B cell (primary cell): ENCODE measurements at regions of chr2 and their contacts with region 1.

Region 1: DNA sequence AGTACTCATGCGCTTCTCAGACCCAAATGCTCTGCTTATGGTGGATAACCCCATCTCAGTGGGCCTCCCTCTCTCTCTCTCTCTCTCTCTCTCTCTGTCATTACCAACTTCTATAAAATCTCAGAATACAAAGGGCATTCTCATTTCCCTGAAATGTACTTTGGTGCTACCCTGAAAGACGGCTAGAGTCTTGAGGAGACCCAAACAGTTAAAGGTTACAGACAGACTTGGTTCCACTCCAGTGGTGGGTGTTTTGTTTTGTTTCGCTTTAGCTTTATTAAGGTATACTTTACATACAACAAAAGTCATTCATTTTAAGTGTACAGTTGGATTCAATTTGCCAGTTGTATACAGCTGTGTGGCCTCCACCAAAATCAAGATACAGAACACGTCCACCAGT is 60.9 kb downstream of the BCL11A start:
- DNase-seq: peak; percentile 52
- ATAC-seq: peak; percentile 84
- H3K4me3 ChIP-seq: peak overlapping the region in 1 of 5 experiments; percentile 28
- H3K4me3 Mint-ChIP-seq: peak overlapping the region; percentile 64
- H3K27ac ChIP-seq: peak overlapping the region; percentile 59 to 93
- H3K27ac Mint-ChIP-seq: peak overlapping the region; percentile 88
- H3K4me1 ChIP-seq: peaks cover 99 to 100% of the 10 kb centered on the region in 2 donors
- H3K4me1 Mint-ChIP-seq: peaks cover 92% of the 10 kb centered on the region
- H3K27me3 ChIP-seq: no peaks in the 10 kb centered on the region
- H3K27me3 Mint-ChIP-seq: no peaks in the 10 kb centered on the region
- CTCF ChIP-seq: no peak

Region 2: GRCh38 chr2:60504049-60504448 is 11.5 kb after region 1 on chr2:
- CTCF ChIA-PET with region 1: interaction called, 6 read pairs
- POLR2A ChIA-PET with region 1: no interaction called
- intact Hi-C with region 1: loop called (anchors 2 kb)
- DNase-seq: no peak
- ATAC-seq: peak; percentile 36
- H3K4me3 ChIP-seq: peak overlapping the region in 2 of 5 experiments; percentile 1 to 32
- H3K4me3 Mint-ChIP-seq: peak overlapping the region; percentile 68
- H3K27ac ChIP-seq: peak overlapping the region; percentile 48 to 93
- H3K27ac Mint-ChIP-seq: peak overlapping the region; percentile 92
- H3K4me1 ChIP-seq: peaks cover 96% of the 10 kb centered on the region in 2 donors
- H3K4me1 Mint-ChIP-seq: peaks cover 94% of the 10 kb centered on the region
- H3K27me3 ChIP-seq: no peaks in the 10 kb centered on the region
- H3K27me3 Mint-ChIP-seq: no peaks in the 10 kb centered on the region
- CTCF ChIP-seq: peak; percentile 37

Region 3: GRCh38 chr2:60661073-60661738 is 168.7 kb after region 1 on chr2:
- CTCF ChIA-PET with region 1: no interaction called
- POLR2A ChIA-PET with region 1: no interaction called
- intact Hi-C with region 1: no loop called
- DNase-seq: peak; percentile 54
- ATAC-seq: peak; percentile 64
- H3K4me3 ChIP-seq: peak overlapping the region in 2 of 5 experiments; percentile 21 to 42
- H3K4me3 Mint-ChIP-seq: peak overlapping the region; percentile 61
- H3K27ac ChIP-seq: peak overlapping the region; percentile 81 to 89
- H3K27ac Mint-ChIP-seq: peak overlapping the region; percentile 80
- H3K4me1 ChIP-seq: peaks cover 39 to 43% of the 10 kb centered on the region in 2 donors
- H3K4me1 Mint-ChIP-seq: peaks cover 61% of the 10 kb centered on the region
- H3K27me3 ChIP-seq: no peaks in the 10 kb centered on the region
- H3K27me3 Mint-ChIP-seq: no peaks in the 10 kb centered on the region
- CTCF ChIP-seq: peak; percentile 8